CD4-positive, alpha-beta memory T cell (primary cell): ENCODE measurements at regions of chr17 and their contacts with region 1.

Region 1: GRCh38 chr17:4934173-4934979 is 2.3 kb downstream of the GP1BA start:
- DNase-seq: peak in 1 of 5 donors; percentile 23
- H3K4me3 ChIP-seq: no peak overlapping the region
- H3K4me3 Mint-ChIP-seq: peak overlapping the region in 5 of 8 donors; percentile 8 to 65 (median 55)
- H3K27ac ChIP-seq: no peak overlapping the region
- H3K27ac Mint-ChIP-seq: peak overlapping the region in 5 of 7 donors; percentile 41 to 86 (median 57)
- H3K4me1 ChIP-seq: peaks cover 26% of the 10 kb centered on the region
- H3K4me1 Mint-ChIP-seq: peaks cover 23 to 50% (median 33%) of the 10 kb centered on the region in 4 donors
- H3K27me3 ChIP-seq: no peaks in the 10 kb centered on the region
- H3K27me3 Mint-ChIP-seq: no peaks in the 10 kb centered on the region

Region 2: DNA sequence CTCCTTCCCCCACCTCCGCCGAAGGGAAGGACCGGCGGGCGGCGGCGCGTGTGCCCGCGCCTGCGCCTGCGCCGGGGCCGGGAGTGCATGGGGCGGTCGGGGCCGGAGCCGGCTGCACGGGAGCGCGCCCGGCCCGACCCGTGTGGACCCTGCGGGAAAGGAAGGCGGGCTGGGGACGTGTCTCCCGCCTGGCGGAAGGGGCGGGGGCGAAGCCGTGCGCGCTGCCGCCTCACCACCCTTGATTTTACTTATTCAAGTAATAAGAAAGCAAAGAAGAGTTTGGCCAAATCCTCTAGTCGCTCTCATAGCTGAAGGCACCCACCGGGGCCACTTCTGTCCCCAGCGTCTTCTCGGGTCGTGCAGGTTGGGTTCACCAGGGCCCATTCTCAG is 14.6 kb after region 1 on chr17:
- CTCF ChIA-PET with region 1: no interaction called
- POLR2A ChIA-PET with region 1: interaction called, 215 read pairs
- intact Hi-C with region 1: no loop called
- DNase-seq: peak in 4 of 5 donors; percentile 78 to 82 (median 80)
- H3K4me3 ChIP-seq: peak overlapping the region; percentile 61 to 94
- H3K4me3 Mint-ChIP-seq: peak overlapping the region; percentile 95 to 100 (median 99)
- H3K27ac ChIP-seq: peak overlapping the region; percentile 94
- H3K27ac Mint-ChIP-seq: peak overlapping the region; percentile 92 to 100 (median 98)
- H3K4me1 ChIP-seq: peaks cover 43% of the 10 kb centered on the region
- H3K4me1 Mint-ChIP-seq: peaks cover 24 to 63% (median 39%) of the 10 kb centered on the region in 4 donors
- H3K27me3 ChIP-seq: no peaks in the 10 kb centered on the region
- H3K27me3 Mint-ChIP-seq: no peaks in the 10 kb centered on the region